ENCODE measurements at regions of chr3 and their contacts with region 1.

Region 1: GRCh38 chr3:14391033-14391432 is 11.4 kb upstream of the SLC6A6 start:
- DNase-seq: peak; percentile 54
- ATAC-seq: peak; percentile 37; the same call in 1 of the 2 replicates
- H3K4me3 ChIP-seq: no peak overlapping the region
- H3K27ac ChIP-seq: no peak overlapping the region
- H3K4me1 ChIP-seq: no peaks in the 10 kb centered on the region
- H3K27me3 ChIP-seq: no peaks in the 10 kb centered on the region
- CTCF ChIP-seq: no peak

Region 2: GRCh38 chr3:14377348-14378169 is 13.5 kb before region 1 on chr3:
- CTCF ChIA-PET with region 1: no interaction called
- POLR2A ChIA-PET with region 1: interaction called, 13 read pairs
- intact Hi-C with region 1: no loop called
- DNase-seq: no peak
- ATAC-seq: no peak
- H3K4me3 ChIP-seq: no peak overlapping the region
- H3K27ac ChIP-seq: no peak overlapping the region
- H3K4me1 ChIP-seq: peaks cover 5% of the 10 kb centered on the region
- H3K27me3 ChIP-seq: no peaks in the 10 kb centered on the region
- CTCF ChIP-seq: no peak